ENCODE measurements at regions of chr12 and their contacts with region 1.

Region 1: GRCh38 chr12:52879394-52880351 is 25.2 kb downstream of the KRT8 start:
- DNase-seq: peak; percentile 69
- ATAC-seq: peak; percentile 89
- H3K4me3 ChIP-seq: peak overlapping the region in 2 of 5 experiments; percentile 20 to 31
- H3K4me3 Mint-ChIP-seq: peak overlapping the region; percentile 66
- H3K27ac ChIP-seq: no peak overlapping the region
- H3K27ac Mint-ChIP-seq: no peak overlapping the region
- H3K4me1 ChIP-seq: peaks cover 7 to 12% of the 10 kb centered on the region in 2 donors
- H3K4me1 Mint-ChIP-seq: peaks cover 13% of the 10 kb centered on the region
- H3K27me3 ChIP-seq: peaks cover 0 to 27% (median 4%) of the 10 kb centered on the region in 4 experiments
- H3K27me3 Mint-ChIP-seq: peaks cover 20% of the 10 kb centered on the region
- CTCF ChIP-seq: peak; percentile 72

Region 2: DNA sequence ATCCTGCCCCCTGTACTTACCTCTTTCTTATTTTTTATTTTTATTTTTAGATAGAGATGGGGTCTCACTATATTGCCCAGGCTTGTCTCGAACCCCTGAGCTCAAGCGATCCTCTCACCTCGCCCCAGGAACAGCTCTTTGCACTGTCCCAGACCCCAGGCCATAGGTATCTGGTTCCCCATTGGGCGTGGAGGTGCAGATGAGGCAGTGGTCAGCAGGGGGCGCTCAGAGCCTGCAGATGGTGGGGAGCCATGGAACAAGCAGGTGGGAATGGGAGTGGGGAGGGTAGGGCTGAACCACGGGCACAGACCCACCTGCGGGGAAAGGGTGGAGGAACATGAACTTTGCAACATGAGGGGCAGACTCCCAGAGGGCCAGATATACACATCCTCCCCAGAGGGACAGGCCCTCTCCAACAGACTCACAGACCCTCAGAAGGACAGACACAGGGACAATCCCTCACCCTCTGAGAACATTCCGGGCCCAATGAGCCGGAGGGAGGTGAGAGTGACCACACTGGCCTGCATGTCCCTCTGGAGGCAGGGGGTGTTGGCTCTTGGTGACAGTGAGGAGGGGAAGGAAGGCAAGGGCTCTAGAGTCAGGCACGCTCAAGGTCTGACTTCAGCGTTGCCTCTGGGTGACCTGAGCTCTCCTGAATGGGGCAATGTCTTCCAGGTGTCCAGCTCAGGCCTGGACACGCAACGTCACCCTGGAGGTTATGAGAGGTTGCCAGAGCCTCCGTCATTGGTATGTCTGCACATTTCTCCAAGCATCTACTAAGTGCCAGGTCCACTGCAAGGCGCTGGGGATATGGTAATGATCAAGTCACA is 722.7 kb before region 1 on chr12:
- CTCF ChIA-PET with region 1: interaction called, 5 read pairs
- POLR2A ChIA-PET with region 1: no interaction called
- intact Hi-C with region 1: loop called (anchors 10 kb)
- DNase-seq: peak; percentile 66
- ATAC-seq: peak; percentile 60
- H3K4me3 ChIP-seq: no peak overlapping the region
- H3K4me3 Mint-ChIP-seq: no peak overlapping the region
- H3K27ac ChIP-seq: no peak overlapping the region
- H3K27ac Mint-ChIP-seq: peak overlapping the region; percentile 41
- H3K4me1 ChIP-seq: peaks cover 3 to 18% of the 10 kb centered on the region in 2 donors
- H3K4me1 Mint-ChIP-seq: peaks cover 3% of the 10 kb centered on the region
- H3K27me3 ChIP-seq: peaks cover 0 to 12% (median 0%) of the 10 kb centered on the region in 4 experiments
- H3K27me3 Mint-ChIP-seq: peaks cover 18% of the 10 kb centered on the region
- CTCF ChIP-seq: peak; percentile 78

Region 3: GRCh38 chr12:52372216-52373154 is 507.2 kb before region 1 on chr12:
- CTCF ChIA-PET with region 1: interaction called, 9 read pairs
- POLR2A ChIA-PET with region 1: no interaction called
- intact Hi-C with region 1: loop called (anchors 2 kb)
- DNase-seq: peak; percentile 39
- ATAC-seq: no peak
- H3K4me3 ChIP-seq: no peak overlapping the region
- H3K4me3 Mint-ChIP-seq: no peak overlapping the region
- H3K27ac ChIP-seq: no peak overlapping the region
- H3K27ac Mint-ChIP-seq: no peak overlapping the region
- H3K4me1 ChIP-seq: no peaks in the 10 kb centered on the region
- H3K4me1 Mint-ChIP-seq: no peaks in the 10 kb centered on the region
- H3K27me3 ChIP-seq: peaks cover 0 to 11% (median 4%) of the 10 kb centered on the region in 4 experiments
- H3K27me3 Mint-ChIP-seq: peaks cover 33% of the 10 kb centered on the region
- CTCF ChIP-seq: peak; percentile 34

Region 4: DNA sequence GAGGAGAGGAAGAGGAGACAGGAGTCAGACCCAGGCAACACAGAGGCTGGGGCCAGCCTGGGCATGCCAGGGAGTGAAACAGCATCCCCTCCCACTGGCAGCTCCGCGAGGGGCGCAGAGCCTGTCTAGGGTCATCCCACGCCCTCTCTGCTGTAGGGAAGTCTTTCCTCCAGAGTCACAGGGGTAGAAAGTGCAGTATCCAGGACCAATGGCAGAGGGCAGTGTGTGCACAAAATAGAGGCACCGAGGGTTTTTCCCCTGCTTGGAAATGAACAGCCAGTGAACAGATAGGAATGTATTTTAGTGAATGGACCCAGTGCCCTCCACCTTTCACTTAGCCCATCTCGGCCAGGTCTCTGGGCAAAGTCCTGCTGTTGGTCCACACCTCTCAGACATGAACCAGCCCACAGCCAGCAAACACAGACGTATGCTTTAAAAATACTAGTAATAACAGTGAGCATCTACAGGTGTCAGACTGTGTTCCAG is 296.7 kb before region 1 on chr12:
- CTCF ChIA-PET with region 1: interaction called, 7 read pairs
- POLR2A ChIA-PET with region 1: no interaction called
- intact Hi-C with region 1: loop called (anchors 10 kb)
- DNase-seq: peak; percentile 23
- ATAC-seq: no peak
- H3K4me3 ChIP-seq: no peak overlapping the region
- H3K4me3 Mint-ChIP-seq: no peak overlapping the region
- H3K27ac ChIP-seq: no peak overlapping the region
- H3K27ac Mint-ChIP-seq: no peak overlapping the region
- H3K4me1 ChIP-seq: no peaks in the 10 kb centered on the region
- H3K4me1 Mint-ChIP-seq: no peaks in the 10 kb centered on the region
- H3K27me3 ChIP-seq: no peaks in the 10 kb centered on the region
- H3K27me3 Mint-ChIP-seq: peaks cover 12% of the 10 kb centered on the region
- CTCF ChIP-seq: peak; percentile 38

Region 5: GRCh38 chr12:52895061-52895887 is 15.6 kb after region 1 on chr12:
- CTCF ChIA-PET with region 1: interaction called, 29 read pairs
- POLR2A ChIA-PET with region 1: no interaction called
- intact Hi-C with region 1: no loop called
- DNase-seq: no peak
- ATAC-seq: no peak
- H3K4me3 ChIP-seq: no peak overlapping the region
- H3K4me3 Mint-ChIP-seq: no peak overlapping the region
- H3K27ac ChIP-seq: no peak overlapping the region
- H3K27ac Mint-ChIP-seq: no peak overlapping the region
- H3K4me1 ChIP-seq: no peaks in the 10 kb centered on the region
- H3K4me1 Mint-ChIP-seq: no peaks in the 10 kb centered on the region
- H3K27me3 ChIP-seq: peaks cover 0 to 2% (median 0%) of the 10 kb centered on the region in 4 experiments
- H3K27me3 Mint-ChIP-seq: peaks cover 15% of the 10 kb centered on the region
- CTCF ChIP-seq: no peak

Region 6: GRCh38 chr12:52980693-52981423 is 101.2 kb after region 1 on chr12:
- CTCF ChIA-PET with region 1: interaction called, 260 read pairs
- POLR2A ChIA-PET with region 1: interaction called, 4 read pairs
- intact Hi-C with region 1: no loop called
- DNase-seq: peak; percentile 87
- ATAC-seq: peak; percentile 95
- H3K4me3 ChIP-seq: no peak overlapping the region
- H3K4me3 Mint-ChIP-seq: no peak overlapping the region
- H3K27ac ChIP-seq: no peak overlapping the region
- H3K27ac Mint-ChIP-seq: no peak overlapping the region
- H3K4me1 ChIP-seq: no peaks in the 10 kb centered on the region
- H3K4me1 Mint-ChIP-seq: no peaks in the 10 kb centered on the region
- H3K27me3 ChIP-seq: peaks cover 0 to 8% (median 4%) of the 10 kb centered on the region in 4 experiments
- H3K27me3 Mint-ChIP-seq: peaks cover 38% of the 10 kb centered on the region
- CTCF ChIP-seq: peak; percentile 98